Transverse colon (tissue), 4 donors: ENCODE measurements at regions of chr1 and their contacts with region 1.

Region 1: GRCh38 chr1:24201941-24202440 is 14.9 kb upstream of the IFNLR1 start:
- DNase-seq: peak; percentile 94
- H3K4me3 ChIP-seq: no peak overlapping the region
- H3K27ac ChIP-seq: peak overlapping the region; percentile 58 to 75 (median 64)
- H3K4me1 ChIP-seq: peaks cover 3 to 27% (median 12%) of the 10 kb centered on the region in 4 donors
- H3K27me3 ChIP-seq: no peaks in the 10 kb centered on the region
- CTCF ChIP-seq: peak; percentile 67 to 95 (median 80)
- EP300 ChIP-seq: no peak
- POLR2A ChIP-seq: no peak

Region 2: GRCh38 chr1:24385160-24385940 is 183.4 kb after region 1 on chr1:
- in situ Hi-C with region 1: loop called (anchors 5 kb)
- intact Hi-C with region 1: no loop called
- DNase-seq: no peak
- H3K4me3 ChIP-seq: no peak overlapping the region
- H3K27ac ChIP-seq: peak overlapping the region in 1 of 4 donors; percentile 34
- H3K4me1 ChIP-seq: peaks cover 0 to 37% (median 15%) of the 10 kb centered on the region in 4 donors
- H3K27me3 ChIP-seq: no peaks in the 10 kb centered on the region
- CTCF ChIP-seq: peak; percentile 18 to 46 (median 26)
- EP300 ChIP-seq: no peak
- POLR2A ChIP-seq: no peak

Region 3: GRCh38 chr1:24635195-24635843 is 433.3 kb after region 1 on chr1:
- in situ Hi-C with region 1: loop called in 1 of 4 experiments (anchors 10 kb)
- intact Hi-C with region 1: no loop called
- DNase-seq: no peak
- H3K4me3 ChIP-seq: no peak overlapping the region
- H3K27ac ChIP-seq: no peak overlapping the region
- H3K4me1 ChIP-seq: peaks cover 0 to 4% (median 0%) of the 10 kb centered on the region in 4 donors
- H3K27me3 ChIP-seq: no peaks in the 10 kb centered on the region
- CTCF ChIP-seq: peak; percentile 42 to 53 (median 48)
- EP300 ChIP-seq: no peak
- POLR2A ChIP-seq: no peak